Activated CD4-positive, alpha-beta memory T cell treated with anti-CD3 and anti-CD28 coated beads for 36 hours (primary cell): ENCODE measurements at regions of chr9 and their contacts with region 1.

Region 1: DNA sequence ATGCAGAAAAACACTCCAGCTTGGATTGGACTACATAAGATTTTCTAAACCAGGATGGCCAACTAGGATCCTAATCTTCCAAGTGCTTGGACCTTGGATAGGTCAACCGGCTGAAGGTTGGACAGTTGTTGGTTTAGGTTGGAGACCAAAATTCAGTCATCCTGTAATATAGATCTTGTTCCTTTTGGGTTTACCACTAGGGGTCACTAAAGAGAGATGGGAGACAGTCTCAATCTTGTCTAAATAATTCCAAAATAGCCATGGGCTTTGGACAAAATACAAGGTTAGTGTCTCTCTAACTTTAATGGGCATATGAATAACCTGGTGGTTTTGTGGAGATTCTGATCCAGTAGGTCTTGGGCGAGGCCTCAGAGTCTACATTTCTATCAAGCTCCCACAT is 148.7 kb upstream of the ERCC6L2 start:
- DNase-seq: no peak
- H3K4me3 Mint-ChIP-seq: no peak overlapping the region
- H3K27ac Mint-ChIP-seq: no peak overlapping the region
- H3K4me1 Mint-ChIP-seq: peaks cover 38% of the 10 kb centered on the region
- H3K27me3 Mint-ChIP-seq: peaks cover 15% of the 10 kb centered on the region

Region 2: GRCh38 chr9:94860968-94861871 is 865.5 kb before region 1 on chr9:
- CTCF ChIA-PET with region 1: no interaction called
- POLR2A ChIA-PET with region 1: no interaction called
- intact Hi-C with region 1: loop called (anchors 10 kb)
- DNase-seq: peak; percentile 79
- H3K4me3 Mint-ChIP-seq: peak overlapping the region; percentile 25
- H3K27ac Mint-ChIP-seq: peak overlapping the region; percentile 76
- H3K4me1 Mint-ChIP-seq: peaks cover 44% of the 10 kb centered on the region
- H3K27me3 Mint-ChIP-seq: no peaks in the 10 kb centered on the region

Region 3: GRCh38 chr9:95510709-95511615 is 215.8 kb before region 1 on chr9:
- CTCF ChIA-PET with region 1: no interaction called
- POLR2A ChIA-PET with region 1: no interaction called
- intact Hi-C with region 1: loop called (anchors 2 kb)
- DNase-seq: peak; percentile 91
- H3K4me3 Mint-ChIP-seq: peak overlapping the region; percentile 88
- H3K27ac Mint-ChIP-seq: peak overlapping the region; percentile 88
- H3K4me1 Mint-ChIP-seq: peaks cover 32% of the 10 kb centered on the region
- H3K27me3 Mint-ChIP-seq: peaks cover 19% of the 10 kb centered on the region

Region 4: GRCh38 chr9:95852059-95853032 is 125.6 kb after region 1 on chr9:
- CTCF ChIA-PET with region 1: interaction called, 9 read pairs
- POLR2A ChIA-PET with region 1: no interaction called
- intact Hi-C with region 1: loop called (anchors 1 kb)
- DNase-seq: no peak
- H3K4me3 Mint-ChIP-seq: no peak overlapping the region
- H3K27ac Mint-ChIP-seq: no peak overlapping the region
- H3K4me1 Mint-ChIP-seq: peaks cover 22% of the 10 kb centered on the region
- H3K27me3 Mint-ChIP-seq: no peaks in the 10 kb centered on the region

Region 5: GRCh38 chr9:96020792-96021550 is 294.2 kb after region 1 on chr9:
- CTCF ChIA-PET with region 1: interaction called, 3 read pairs
- POLR2A ChIA-PET with region 1: no interaction called
- intact Hi-C with region 1: loop called (anchors 1 kb)
- DNase-seq: peak; percentile 65
- H3K4me3 Mint-ChIP-seq: peak overlapping the region; percentile 73
- H3K27ac Mint-ChIP-seq: peak overlapping the region; percentile 61
- H3K4me1 Mint-ChIP-seq: peaks cover 52% of the 10 kb centered on the region
- H3K27me3 Mint-ChIP-seq: peaks cover 12% of the 10 kb centered on the region

Region 6: GRCh38 chr9:96150324-96151227 is 423.8 kb after region 1 on chr9:
- CTCF ChIA-PET with region 1: no interaction called
- POLR2A ChIA-PET with region 1: no interaction called
- intact Hi-C with region 1: loop called (anchors 1 kb)
- DNase-seq: peak; percentile 79
- H3K4me3 Mint-ChIP-seq: no peak overlapping the region
- H3K27ac Mint-ChIP-seq: peak overlapping the region; percentile 42
- H3K4me1 Mint-ChIP-seq: peaks cover 24% of the 10 kb centered on the region
- H3K27me3 Mint-ChIP-seq: peaks cover 24% of the 10 kb centered on the region

Region 7: GRCh38 chr9:96241391-96241809 is 514.6 kb after region 1 on chr9:
- CTCF ChIA-PET with region 1: no interaction called
- POLR2A ChIA-PET with region 1: no interaction called
- intact Hi-C with region 1: loop called (anchors 1 kb)
- DNase-seq: peak; percentile 84
- H3K4me3 Mint-ChIP-seq: peak overlapping the region; percentile 34
- H3K27ac Mint-ChIP-seq: no peak overlapping the region
- H3K4me1 Mint-ChIP-seq: peaks cover 17% of the 10 kb centered on the region
- H3K27me3 Mint-ChIP-seq: peaks cover 69% of the 10 kb centered on the region